ENCODE measurements at regions of chr18 and their contacts with region 1.

Region 1: GRCh38 chr18:58069099-58069498 is 25.1 kb downstream of the NEDD4L start:
- DNase-seq: no peak
- ATAC-seq: no peak
- H3K4me3 ChIP-seq: no peak overlapping the region
- H3K4me3 Mint-ChIP-seq: no peak overlapping the region
- H3K27ac ChIP-seq: no peak overlapping the region
- H3K27ac Mint-ChIP-seq: no peak overlapping the region
- H3K4me1 ChIP-seq: no peaks in the 10 kb centered on the region
- H3K4me1 Mint-ChIP-seq: no peaks in the 10 kb centered on the region
- H3K27me3 ChIP-seq: no peaks in the 10 kb centered on the region
- H3K27me3 Mint-ChIP-seq: peaks cover 2 to 22% of the 10 kb centered on the region in 2 donors

Region 2: DNA sequence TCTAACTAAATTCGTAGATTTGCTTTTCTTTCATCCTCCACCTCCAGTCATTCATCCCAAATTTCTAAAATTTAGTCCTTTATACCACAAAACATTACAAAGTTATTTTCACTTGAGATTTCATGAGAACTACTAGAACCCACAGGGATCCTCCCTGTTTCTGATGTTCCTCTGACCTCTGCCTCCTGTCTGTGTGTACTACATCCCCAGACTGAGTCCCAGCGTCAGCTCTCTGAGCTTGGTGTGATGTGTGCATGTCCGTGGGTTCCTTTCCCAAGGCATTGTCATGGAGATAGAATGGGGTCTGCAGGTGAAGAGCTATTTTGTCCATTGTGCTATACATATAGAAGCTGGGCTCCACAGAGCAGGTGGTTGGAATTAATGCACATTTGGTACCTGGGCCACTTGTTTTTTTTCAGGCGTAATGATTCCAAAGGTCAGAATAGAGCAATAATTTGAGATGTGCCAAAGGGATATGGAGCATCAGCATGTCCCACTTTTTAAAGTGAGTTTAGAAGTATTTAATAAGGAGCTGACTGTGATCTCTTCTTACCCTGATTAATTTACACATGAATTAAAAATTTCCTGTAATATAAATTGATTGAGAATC is 1073.4 kb before region 1 on chr18:
- CTCF ChIA-PET with region 1: interaction called in 1 of 2 experiments, 10 read pairs
- POLR2A ChIA-PET with region 1: no interaction called
- DNase-seq: no peak
- ATAC-seq: no peak
- H3K4me3 ChIP-seq: no peak overlapping the region
- H3K4me3 Mint-ChIP-seq: no peak overlapping the region
- H3K27ac ChIP-seq: no peak overlapping the region
- H3K27ac Mint-ChIP-seq: no peak overlapping the region
- H3K4me1 ChIP-seq: no peaks in the 10 kb centered on the region
- H3K4me1 Mint-ChIP-seq: peaks cover 5 to 15% (median 9%) of the 10 kb centered on the region in 3 donors
- H3K27me3 ChIP-seq: no peaks in the 10 kb centered on the region
- H3K27me3 Mint-ChIP-seq: no peaks in the 10 kb centered on the region

Region 3: GRCh38 chr18:57404345-57404744 is 664.8 kb before region 1 on chr18:
- CTCF ChIA-PET with region 1: no interaction called
- POLR2A ChIA-PET with region 1: no interaction called
- DNase-seq: no peak
- ATAC-seq: no peak
- H3K4me3 ChIP-seq: no peak overlapping the region
- H3K4me3 Mint-ChIP-seq: no peak overlapping the region
- H3K27ac ChIP-seq: no peak overlapping the region
- H3K27ac Mint-ChIP-seq: no peak overlapping the region
- H3K4me1 ChIP-seq: no peaks in the 10 kb centered on the region
- H3K4me1 Mint-ChIP-seq: no peaks in the 10 kb centered on the region
- H3K27me3 ChIP-seq: peaks cover 2 to 5% of the 10 kb centered on the region in 2 experiments
- H3K27me3 Mint-ChIP-seq: peaks cover 17 to 31% of the 10 kb centered on the region in 2 donors